H1 (cell line): ENCODE measurements at regions of chr18 and their contacts with region 1.

Region 1: GRCh38 chr18:36392164-36392978 is 94.9 kb downstream of the FHOD3 start:
- DNase-seq: no peak
- H3K4me3 ChIP-seq: no peak overlapping the region
- H3K27ac ChIP-seq: no peak overlapping the region
- H3K4me1 ChIP-seq: peaks cover 0 to 4% (median 0%) of the 10 kb centered on the region in 4 experiments; a peak in 2 of 7 replicates
- H3K27me3 ChIP-seq: no peaks in the 10 kb centered on the region
- CTCF ChIP-seq: no peak
- EP300 ChIP-seq: no peak
- POLR2A ChIP-seq: no peak
- RAD21 ChIP-seq: no peak

Region 2: GRCh38 chr18:36402765-36403396 is 10.5 kb after region 1 on chr18:
- CTCF ChIA-PET with region 1: interaction called, 11 read pairs
- POLR2A ChIA-PET with region 1: no interaction called
- DNase-seq: no peak
- H3K4me3 ChIP-seq: no peak overlapping the region
- H3K27ac ChIP-seq: no peak overlapping the region
- H3K4me1 ChIP-seq: peaks cover 0 to 2% (median 2%) of the 10 kb centered on the region in 4 experiments; a peak in 2 of 7 replicates
- H3K27me3 ChIP-seq: no peaks in the 10 kb centered on the region
- CTCF ChIP-seq: peak in 2 of 3 experiments; percentile 44; a peak in 3 of 4 replicates
- EP300 ChIP-seq: no peak
- POLR2A ChIP-seq: no peak
- RAD21 ChIP-seq: peak in 1 of 2 experiments; percentile 38; a peak in 2 of 4 replicates